Cardiac septum (tissue), 1 donor: ENCODE measurements at regions of chr4 and their contacts with region 1.

Region 1: DNA sequence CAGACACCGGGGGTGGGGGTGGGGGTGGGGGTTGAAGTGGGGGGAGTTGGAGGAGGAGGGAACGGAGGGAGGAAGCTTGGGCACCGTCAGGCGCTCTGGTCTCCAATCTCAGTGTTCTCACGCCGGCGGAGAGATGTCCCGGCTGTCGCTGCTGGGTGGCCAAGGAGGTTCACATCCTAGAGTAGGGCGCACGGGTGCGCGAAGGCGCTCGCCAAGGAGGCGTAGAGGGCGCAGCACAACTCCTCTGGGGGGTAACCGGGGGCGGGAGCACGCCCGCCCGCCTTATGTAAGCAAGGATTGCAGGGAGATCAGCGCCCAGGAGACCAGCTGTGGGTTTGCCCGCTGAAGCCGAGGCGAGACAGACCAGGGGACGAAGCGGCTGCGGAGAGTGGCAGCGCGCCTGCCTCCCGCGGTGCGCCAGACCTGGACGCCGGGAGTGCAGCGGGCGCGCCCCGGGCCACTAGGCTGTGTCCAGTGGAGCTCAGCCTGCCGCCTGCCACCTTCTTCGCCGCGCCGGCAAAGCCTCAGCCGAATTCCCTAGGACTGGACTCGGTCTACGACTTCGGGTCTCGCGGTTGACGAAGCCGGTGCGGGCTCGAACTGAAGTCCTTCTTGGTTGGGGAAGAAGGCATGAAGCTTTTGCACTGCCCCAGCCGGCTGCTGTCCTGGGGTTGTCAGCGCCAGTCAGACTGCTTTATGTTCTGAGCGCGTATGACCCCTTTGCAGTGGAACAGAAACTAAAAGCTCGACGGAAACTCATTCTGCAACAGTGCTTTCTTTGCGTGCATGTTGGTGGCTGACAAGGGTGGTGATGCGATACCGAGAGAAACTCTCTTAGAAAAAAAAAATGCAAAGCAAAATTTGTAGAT is 707 bp upstream of the UNC5C start:
- DNase-seq: peak; percentile 74

Region 2: GRCh38 chr4:95505151-95505550 is 44.3 kb before region 1 on chr4:
- intact Hi-C with region 1: loop called (anchors 5 kb)
- DNase-seq: no peak

Region 3: DNA sequence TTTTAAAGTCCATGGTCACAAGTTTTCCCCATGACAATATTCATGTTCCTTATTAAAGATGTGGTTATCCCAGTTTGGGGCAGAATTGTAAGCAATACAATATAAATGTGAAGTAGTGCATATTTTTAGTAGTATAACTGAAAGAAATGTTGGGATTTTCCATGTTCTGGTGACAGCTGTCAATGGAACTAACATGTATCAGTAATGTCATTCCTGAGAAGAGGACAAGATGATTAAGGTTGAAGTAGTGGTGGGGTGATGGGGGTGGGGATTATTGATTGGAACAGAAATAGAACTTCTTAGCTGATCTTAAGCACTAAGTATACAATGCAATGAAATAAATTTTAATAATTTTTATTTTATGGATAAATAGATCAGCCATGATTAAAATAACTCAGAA is 372.0 kb after region 1 on chr4:
- intact Hi-C with region 1: no loop called
- DNase-seq: no peak